MCF 10A (cell line): ENCODE measurements at regions of chr3 and their contacts with region 1.

Region 1: GRCh38 chr3:189394599-189395121 is 222.9 kb downstream of the TPRG1 start:
- DNase-seq: no peak
- H3K4me3 Mint-ChIP-seq: no peak overlapping the region
- H3K27ac Mint-ChIP-seq: no peak overlapping the region
- H3K4me1 Mint-ChIP-seq: peaks cover 32% of the 10 kb centered on the region
- H3K27me3 Mint-ChIP-seq: no peaks in the 10 kb centered on the region
- CTCF ChIP-seq: no peak

Region 2: DNA sequence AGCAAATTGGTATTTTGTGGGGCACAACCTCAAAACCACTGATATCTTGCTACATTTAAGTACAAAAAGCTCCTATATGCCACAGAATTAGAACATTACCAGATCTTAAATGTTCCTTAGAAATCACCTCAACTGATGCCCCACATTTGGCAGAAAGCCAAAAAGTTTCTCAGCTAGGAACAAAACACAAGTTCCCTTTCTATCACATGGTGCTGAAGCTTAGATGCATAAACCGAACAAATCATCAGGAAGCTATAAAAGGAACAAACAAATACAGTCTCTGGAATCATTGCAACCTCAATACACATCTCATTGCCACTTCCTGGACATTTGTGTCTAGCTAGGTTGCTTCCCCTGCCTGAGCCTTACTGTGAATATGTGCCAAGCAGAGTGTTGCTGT is 748.1 kb before region 1 on chr3:
- CTCF ChIA-PET with region 1: no interaction called
- POLR2A ChIA-PET with region 1: no interaction called
- intact Hi-C with region 1: no loop called
- DNase-seq: peak; percentile 19
- H3K4me3 Mint-ChIP-seq: no peak overlapping the region
- H3K27ac Mint-ChIP-seq: no peak overlapping the region
- H3K4me1 Mint-ChIP-seq: no peaks in the 10 kb centered on the region
- H3K27me3 Mint-ChIP-seq: no peaks in the 10 kb centered on the region
- CTCF ChIP-seq: no peak

Region 3: GRCh38 chr3:189324538-189325138 is 70.0 kb before region 1 on chr3:
- CTCF ChIA-PET with region 1: no interaction called
- POLR2A ChIA-PET with region 1: interaction called, 11 read pairs
- intact Hi-C with region 1: no loop called
- DNase-seq: peak; percentile 98
- H3K4me3 Mint-ChIP-seq: no peak overlapping the region
- H3K27ac Mint-ChIP-seq: peak overlapping the region; percentile 69
- H3K4me1 Mint-ChIP-seq: peaks cover 30% of the 10 kb centered on the region
- H3K27me3 Mint-ChIP-seq: no peaks in the 10 kb centered on the region
- CTCF ChIP-seq: no peak

Region 4: DNA sequence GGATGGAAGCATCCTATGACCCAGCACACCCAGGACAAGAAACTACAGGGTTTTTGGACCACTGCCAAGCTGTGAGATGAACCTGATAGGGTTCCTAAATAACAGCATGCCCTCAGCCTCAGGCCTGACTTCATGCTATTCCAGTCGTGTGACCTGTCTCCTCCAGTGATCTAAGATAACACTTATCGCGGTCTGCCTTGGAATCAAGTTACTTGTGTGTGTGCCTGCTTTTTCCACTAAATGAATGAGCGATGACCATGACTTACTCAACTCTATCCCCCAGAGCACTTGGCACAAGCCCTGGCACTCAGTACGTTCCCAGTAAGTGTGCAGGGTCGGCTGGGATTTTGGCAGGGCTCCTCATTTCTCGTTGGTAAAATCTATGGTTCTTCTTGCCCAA is 63.9 kb after region 1 on chr3:
- CTCF ChIA-PET with region 1: no interaction called
- POLR2A ChIA-PET with region 1: interaction called, 18 read pairs
- intact Hi-C with region 1: no loop called
- DNase-seq: peak; percentile 80
- H3K4me3 Mint-ChIP-seq: peak overlapping the region; percentile 26
- H3K27ac Mint-ChIP-seq: peak overlapping the region; percentile 70
- H3K4me1 Mint-ChIP-seq: peaks cover 29% of the 10 kb centered on the region
- H3K27me3 Mint-ChIP-seq: no peaks in the 10 kb centered on the region
- CTCF ChIP-seq: no peak

Region 5: DNA sequence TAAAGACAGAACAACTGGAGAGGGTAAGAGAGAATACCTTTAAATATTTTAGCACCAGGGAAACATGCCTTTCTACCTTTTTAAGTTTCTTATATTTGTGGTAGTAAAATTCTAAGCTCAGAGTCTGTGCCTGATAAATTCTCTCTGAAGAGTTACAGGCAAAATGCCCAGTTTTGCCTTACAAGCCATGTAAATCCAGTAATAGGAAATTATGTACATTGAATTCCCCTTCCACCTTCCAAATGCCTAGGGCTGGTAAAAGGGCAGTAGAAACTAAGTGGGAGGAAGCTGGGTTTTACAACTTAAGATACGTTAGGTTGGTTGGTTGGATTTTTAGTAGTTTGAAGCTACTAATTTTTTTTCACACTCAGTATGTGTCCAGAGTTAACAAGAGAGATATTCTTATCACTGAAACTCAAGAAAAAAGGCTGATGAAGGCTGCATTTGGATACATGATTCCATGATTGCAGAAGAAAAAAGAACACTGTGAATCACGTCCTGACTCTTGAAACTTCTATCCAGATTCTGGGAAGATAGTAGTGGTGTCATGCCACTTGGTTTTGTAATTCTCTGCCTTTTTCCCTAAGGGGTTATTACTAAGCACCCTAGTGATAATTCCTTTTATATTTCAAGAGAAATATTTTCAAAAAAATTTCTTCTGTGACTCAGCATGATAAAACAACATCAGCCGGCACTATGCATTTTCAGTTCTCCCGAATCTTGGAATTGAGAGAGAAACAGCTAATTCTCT is 193.6 kb after region 1 on chr3:
- CTCF ChIA-PET with region 1: no interaction called
- POLR2A ChIA-PET with region 1: interaction called, 18 read pairs
- intact Hi-C with region 1: loop called (anchors 5 kb)
- DNase-seq: peak; percentile 92
- H3K4me3 Mint-ChIP-seq: peak overlapping the region; percentile 60
- H3K27ac Mint-ChIP-seq: peak overlapping the region; percentile 84
- H3K4me1 Mint-ChIP-seq: peaks cover 48% of the 10 kb centered on the region
- H3K27me3 Mint-ChIP-seq: no peaks in the 10 kb centered on the region
- CTCF ChIP-seq: no peak

Region 6: GRCh38 chr3:189841473-189842210 is 447.0 kb after region 1 on chr3:
- CTCF ChIA-PET with region 1: no interaction called
- POLR2A ChIA-PET with region 1: interaction called, 7 read pairs
- intact Hi-C with region 1: loop called (anchors 1 kb)
- DNase-seq: peak; percentile 94
- H3K4me3 Mint-ChIP-seq: peak overlapping the region; percentile 57
- H3K27ac Mint-ChIP-seq: peak overlapping the region; percentile 99
- H3K4me1 Mint-ChIP-seq: peaks cover 58% of the 10 kb centered on the region
- H3K27me3 Mint-ChIP-seq: no peaks in the 10 kb centered on the region
- CTCF ChIP-seq: no peak